Activated naive CD4-positive, alpha-beta T cell treated with anti-CD3 and anti-CD28 coated beads for 36 hours (primary cell): ENCODE measurements at regions of chr17 and their contacts with region 1.

Region 1: DNA sequence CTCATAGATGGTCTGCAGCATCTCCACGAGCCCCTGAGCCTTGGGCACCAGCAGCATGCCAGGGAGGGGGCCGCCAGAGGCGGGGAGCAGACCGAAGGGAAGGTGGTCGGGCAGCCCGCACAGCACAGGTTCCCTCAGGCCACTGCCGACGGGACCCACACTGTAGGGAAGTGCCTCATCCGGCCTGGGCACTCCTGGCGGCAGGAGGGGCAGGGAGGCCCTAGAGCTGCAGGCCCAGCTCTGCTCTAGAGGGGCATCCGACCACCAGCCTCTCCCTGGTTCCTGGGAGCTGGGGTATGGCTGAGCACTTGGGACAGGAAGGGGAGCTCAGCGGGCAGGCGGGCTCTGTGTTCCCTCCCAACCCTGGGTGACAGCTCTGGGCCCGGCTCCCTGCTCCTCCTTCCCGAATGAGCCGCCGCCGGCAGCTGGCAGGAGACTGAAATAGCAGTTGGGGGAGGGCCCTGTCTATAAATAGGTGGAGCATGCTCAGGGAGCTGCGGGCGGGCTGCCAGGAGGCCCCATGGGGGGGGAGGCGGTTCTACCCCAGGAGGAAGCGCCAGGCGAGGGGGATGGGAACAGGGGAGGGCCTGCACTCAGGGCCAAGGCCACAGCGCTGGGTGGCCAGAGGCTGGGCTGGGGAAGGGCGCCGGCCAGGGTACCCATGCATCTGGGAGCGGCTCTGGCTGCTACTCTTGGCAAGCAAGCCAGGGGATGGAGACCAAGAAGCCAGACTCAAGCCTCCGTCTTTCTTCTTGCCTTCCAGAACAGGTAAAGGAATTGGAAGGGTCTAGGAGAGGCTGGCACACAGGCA is 12.4 kb downstream of the HDAC5 start:
- DNase-seq: peak; percentile 87
- H3K4me3 Mint-ChIP-seq: peak overlapping the region; percentile 29
- H3K27ac Mint-ChIP-seq: no peak overlapping the region
- H3K4me1 Mint-ChIP-seq: peaks cover 26% of the 10 kb centered on the region
- H3K27me3 Mint-ChIP-seq: no peaks in the 10 kb centered on the region

Region 2: DNA sequence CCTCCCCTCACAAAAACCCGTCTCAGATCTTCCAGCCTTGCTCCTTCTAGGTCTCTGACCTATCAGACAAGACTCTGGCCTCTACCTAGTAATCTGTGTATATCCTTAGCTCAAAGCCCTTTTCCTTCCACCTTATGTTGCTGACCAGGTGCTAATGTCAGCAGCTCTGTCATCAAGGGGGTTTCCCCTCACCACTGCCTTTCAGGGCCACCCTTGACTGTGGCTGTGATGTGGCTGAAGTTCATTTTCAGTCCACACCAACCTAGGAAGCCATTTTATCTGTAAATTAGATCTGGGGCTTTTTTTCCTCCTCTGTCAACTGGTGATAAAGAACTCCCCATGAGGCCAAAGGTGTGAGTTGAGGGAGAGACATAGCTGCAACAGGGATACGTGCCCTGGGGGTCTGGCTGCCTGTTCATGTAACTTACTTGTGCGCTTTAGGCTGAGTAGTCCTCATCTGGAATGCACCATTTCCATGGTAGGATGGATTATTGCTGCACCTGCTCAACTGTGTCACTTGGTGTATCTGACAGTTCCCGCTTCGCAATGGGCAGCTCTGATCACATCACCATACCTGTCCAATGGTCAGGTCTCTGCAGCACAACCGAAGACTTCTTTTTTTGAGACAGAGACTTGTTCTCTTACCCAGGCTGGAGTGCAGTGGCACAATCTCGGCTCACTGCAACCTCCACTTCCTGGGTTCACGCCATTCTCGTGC is 182.6 kb after region 1 on chr17:
- CTCF ChIA-PET with region 1: interaction called, 10 read pairs
- intact Hi-C with region 1: no loop called
- DNase-seq: no peak
- H3K4me3 Mint-ChIP-seq: no peak overlapping the region
- H3K27ac Mint-ChIP-seq: no peak overlapping the region
- H3K4me1 Mint-ChIP-seq: no peaks in the 10 kb centered on the region
- H3K27me3 Mint-ChIP-seq: no peaks in the 10 kb centered on the region